Endothelial cell of umbilical vein (primary cell): ENCODE measurements at regions of chr13 and their contacts with region 1.

Region 1: GRCh38 chr13:99200432-99201167 is at the start of gene UBAC2:
- DNase-seq: peak; percentile 96
- H3K4me3 ChIP-seq: peak within 1 kb of the TSS; percentile 75 to 95 (median 79)
- H3K27ac ChIP-seq: peak within 1 kb of the TSS; percentile 85
- H3K4me1 ChIP-seq: peaks cover 7% of the 10 kb centered on the region
- H3K27me3 ChIP-seq: no peaks in the 10 kb centered on the region
- CTCF ChIP-seq: no peak
- POLR2A ChIP-seq: peak; percentile 97
- total RNA-seq, gene UBAC2: 45.2 and 45.7 TPM in 2 replicates

Region 2: DNA sequence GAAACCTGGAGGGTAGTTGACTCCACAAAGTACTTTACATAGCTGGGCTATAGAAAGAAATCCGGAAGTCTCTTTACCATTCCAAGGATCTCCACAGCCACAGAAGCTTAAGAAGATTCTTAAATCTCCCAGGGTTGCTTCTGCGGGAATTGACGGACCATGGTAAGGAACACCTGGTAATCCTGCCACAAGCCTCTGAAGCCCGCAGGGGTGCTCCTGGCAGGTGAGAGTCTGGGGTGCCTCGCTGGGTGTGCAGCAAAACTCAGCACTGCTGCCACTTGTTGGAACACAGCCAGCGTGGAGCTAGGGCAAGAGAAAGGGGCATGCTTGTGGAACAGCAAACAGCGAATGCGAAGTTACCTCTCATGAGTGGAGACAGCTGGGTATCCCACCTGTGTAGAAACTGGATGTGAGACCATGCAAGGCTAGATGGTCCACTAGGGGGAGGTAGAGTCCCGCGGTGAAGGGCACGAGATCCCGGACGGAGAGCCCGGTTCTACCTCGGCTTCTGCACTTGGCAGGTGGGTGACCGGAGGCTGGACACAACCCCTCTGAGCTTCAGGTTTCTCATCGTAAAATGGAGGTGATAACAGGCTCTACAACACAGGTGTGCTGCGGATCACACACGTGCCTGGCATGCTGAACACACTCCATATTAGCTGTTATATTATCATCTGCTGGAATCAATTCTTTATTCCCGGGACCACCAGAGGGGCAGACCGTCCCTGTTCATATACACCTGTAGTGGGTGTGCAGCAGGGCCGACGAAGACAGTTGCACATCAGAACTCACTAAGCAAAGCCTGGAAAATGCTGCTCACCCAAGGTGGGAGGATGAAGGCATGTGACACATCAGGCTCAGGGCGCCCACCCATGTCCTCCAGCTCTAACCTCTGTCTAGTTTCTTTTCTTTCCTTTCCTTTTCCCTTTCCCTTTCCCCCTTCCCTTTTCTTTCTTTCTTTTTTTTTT is 24.0 kb before region 1 on chr13:
- CTCF ChIA-PET with region 1: interaction called, 17 read pairs
- POLR2A ChIA-PET with region 1: no interaction called
- dilution Hi-C with region 1: no loop called
- intact Hi-C with region 1: no loop called
- DNase-seq: peak; percentile 62
- H3K4me3 ChIP-seq: no peak overlapping the region
- H3K27ac ChIP-seq: no peak overlapping the region
- H3K4me1 ChIP-seq: no peaks in the 10 kb centered on the region
- H3K27me3 ChIP-seq: peaks cover 6 to 14% of the 10 kb centered on the region in 2 experiments
- CTCF ChIP-seq: peak; percentile 86 to 94
- POLR2A ChIP-seq: no peak

Region 3: GRCh38 chr13:99312493-99312883 is 111.9 kb after region 1 on chr13:
- CTCF ChIA-PET with region 1: no interaction called
- POLR2A ChIA-PET with region 1: no interaction called
- dilution Hi-C with region 1: no loop called
- intact Hi-C with region 1: loop called (anchors 1 kb)
- DNase-seq: no peak
- H3K4me3 ChIP-seq: no peak overlapping the region
- H3K27ac ChIP-seq: peak overlapping the region; percentile 1
- H3K4me1 ChIP-seq: peaks cover 39% of the 10 kb centered on the region
- H3K27me3 ChIP-seq: no peaks in the 10 kb centered on the region
- CTCF ChIP-seq: no peak
- POLR2A ChIP-seq: no peak

Region 4: DNA sequence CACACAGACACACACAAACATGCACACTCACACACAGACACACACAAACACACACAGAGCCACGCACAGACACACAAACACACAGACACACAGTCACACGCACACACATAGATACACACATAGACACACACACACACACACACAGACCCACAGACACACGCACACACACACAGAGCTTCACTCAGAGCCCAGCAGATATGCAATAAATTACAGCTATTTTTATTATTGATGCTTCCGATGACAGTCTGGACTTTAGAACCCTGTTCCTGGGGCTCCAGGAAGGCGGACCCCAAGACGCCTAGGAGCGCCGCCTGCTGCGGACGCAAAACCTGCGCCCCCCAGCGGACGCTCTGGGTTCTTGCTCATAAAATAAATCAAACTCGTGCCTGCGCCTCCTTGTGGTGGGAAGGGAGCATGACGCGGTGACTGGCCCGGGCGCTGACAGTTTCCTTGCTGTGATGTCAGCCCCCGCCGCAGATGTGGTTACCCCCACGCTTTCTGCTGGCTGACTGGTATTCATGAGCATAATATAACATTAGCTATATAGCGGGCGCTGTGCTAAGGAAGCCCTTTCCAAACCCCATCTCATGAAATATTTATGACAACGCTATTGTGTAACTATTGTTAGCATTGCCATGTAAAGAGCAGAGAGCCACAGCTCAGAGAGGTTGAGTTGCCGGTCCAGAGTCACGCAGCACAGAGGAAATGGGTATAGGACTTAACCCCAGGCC is 236.3 kb after region 1 on chr13:
- CTCF ChIA-PET with region 1: interaction called, 3 read pairs
- POLR2A ChIA-PET with region 1: no interaction called
- dilution Hi-C with region 1: no loop called
- intact Hi-C with region 1: loop called (anchors 10 kb)
- DNase-seq: peak; percentile 84
- H3K4me3 ChIP-seq: no peak overlapping the region
- H3K27ac ChIP-seq: no peak overlapping the region
- H3K4me1 ChIP-seq: peaks cover 9% of the 10 kb centered on the region
- H3K27me3 ChIP-seq: peaks cover 13 to 29% of the 10 kb centered on the region in 2 experiments
- CTCF ChIP-seq: peak; percentile 100
- POLR2A ChIP-seq: no peak